Dorsolateral prefrontal cortex (tissue), 120 donors: ENCODE measurements at regions of chr20 and their contacts with region 1.

Region 1: DNA sequence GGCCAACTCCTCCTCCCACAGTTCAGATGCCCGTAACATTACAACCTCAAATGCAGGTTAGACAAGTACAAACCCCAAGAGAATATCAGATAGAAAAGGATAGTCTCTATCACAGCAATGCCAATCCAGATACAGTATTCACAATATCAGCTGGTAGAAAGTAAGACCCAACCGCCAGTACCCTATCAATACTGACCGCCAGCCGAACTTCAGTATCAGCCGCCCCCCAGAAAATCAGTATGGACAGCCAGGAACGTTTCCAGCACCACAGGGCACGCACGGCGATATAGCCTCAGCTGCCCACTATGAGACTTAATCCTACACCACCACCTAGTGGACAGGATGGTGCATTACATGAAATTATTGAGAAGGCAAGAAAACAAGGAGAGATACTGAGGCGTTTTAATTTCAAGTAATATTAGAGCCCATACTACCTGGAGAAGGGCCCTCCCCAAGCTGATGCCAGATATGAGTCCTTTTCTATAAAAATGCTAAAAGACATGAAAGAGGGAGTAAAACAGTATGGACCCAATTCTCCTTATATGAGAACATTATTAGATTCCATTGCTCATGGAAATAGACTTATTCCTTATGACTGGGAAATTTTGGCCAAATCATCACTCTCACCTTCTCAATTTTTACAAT is 17.6 kb upstream of the EIF2S2 start:
- DNase-seq: peak in 8 of 10 donors; percentile 22 to 73 (median 59)
- H3K4me3 ChIP-seq: peak overlapping the region in 56 of 59 donors; percentile 18 to 62 (median 46)
- H3K27ac ChIP-seq: peak overlapping the region in 2 of 59 donors; percentile 14 to 36
- H3K27me3 ChIP-seq: no peaks in the 10 kb centered on the region
- CTCF ChIP-seq: peak; percentile 74 to 97 (median 88)

Region 2: DNA sequence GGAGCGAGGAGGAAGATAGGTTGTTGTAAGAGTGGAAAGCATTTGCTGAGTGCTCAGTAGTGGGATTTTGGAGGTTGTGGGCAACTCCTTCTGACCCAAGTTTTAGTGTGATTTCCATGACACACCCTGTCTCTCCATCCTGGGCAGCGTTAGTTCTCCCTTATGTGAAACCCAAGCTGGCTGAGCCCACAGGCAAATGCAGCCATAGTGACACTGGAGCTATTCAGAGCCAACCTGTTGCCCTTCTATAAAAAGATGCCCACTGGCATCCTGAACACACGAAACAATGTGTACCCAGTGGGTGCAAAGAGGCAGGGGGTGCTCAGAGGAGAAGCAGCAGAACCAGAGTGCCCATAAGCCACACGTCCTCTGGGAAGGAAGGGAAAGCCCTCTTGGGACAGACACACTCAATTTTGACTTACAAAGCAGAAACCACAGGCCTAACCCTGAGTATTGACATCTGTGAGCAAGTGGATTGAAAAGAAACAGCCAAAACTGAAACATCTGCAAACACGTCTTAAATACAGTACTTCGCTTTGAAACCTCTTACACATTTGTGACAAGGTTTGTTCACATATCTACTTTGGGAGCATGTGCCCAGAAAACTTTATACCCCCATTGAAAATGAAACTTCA is 792.0 kb before region 1 on chr20:
- intact Hi-C with region 1: no loop called
- DNase-seq: no peak
- H3K4me3 ChIP-seq: no peak overlapping the region
- H3K27ac ChIP-seq: no peak overlapping the region
- H3K27me3 ChIP-seq: no peaks in the 10 kb centered on the region
- CTCF ChIP-seq: no peak

Region 3: GRCh38 chr20:33862709-33863403 is 266.8 kb before region 1 on chr20:
- intact Hi-C with region 1: loop called (anchors 5 kb)
- DNase-seq: peak; percentile 11 to 68 (median 58)
- H3K4me3 ChIP-seq: peak overlapping the region in 39 of 59 donors; percentile 2 to 52 (median 24)
- H3K27ac ChIP-seq: peak overlapping the region in 2 of 59 donors; percentile 11 to 20
- H3K27me3 ChIP-seq: no peaks in the 10 kb centered on the region
- CTCF ChIP-seq: peak; percentile 43 to 86 (median 71)

Region 4: DNA sequence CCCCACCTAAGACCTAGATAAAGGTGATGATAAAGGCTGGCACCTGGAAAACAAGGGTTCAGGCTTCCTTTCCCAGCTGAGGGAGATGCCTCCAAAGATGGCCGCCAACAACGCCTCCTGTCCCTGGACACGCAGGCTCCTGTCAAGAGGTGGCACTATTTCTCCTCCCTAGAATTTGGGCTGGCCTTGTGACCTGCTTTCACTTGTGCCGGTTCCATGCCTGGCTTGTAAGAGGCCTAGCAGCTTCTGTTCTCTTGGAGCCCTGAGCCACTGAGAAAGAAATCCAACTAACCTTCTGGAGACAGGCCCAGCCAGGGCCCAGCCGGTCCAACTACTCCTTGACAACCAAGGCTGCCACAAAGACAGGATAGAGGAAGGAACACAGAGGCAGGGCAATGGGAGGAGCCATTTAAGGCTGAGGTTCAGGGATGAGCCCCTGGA is 196.2 kb before region 1 on chr20:
- intact Hi-C with region 1: loop called in 1 of 2 experiments (anchors 5 kb)
- DNase-seq: peak; percentile 30 to 78 (median 68)
- H3K4me3 ChIP-seq: no peak overlapping the region
- H3K27ac ChIP-seq: peak overlapping the region in 47 of 59 donors; percentile 4 to 86 (median 60)
- H3K27me3 ChIP-seq: no peaks in the 10 kb centered on the region
- CTCF ChIP-seq: peak in 55 of 56 donors; percentile 30 to 87 (median 68)

Region 5: GRCh38 chr20:33947709-33948295 is 181.8 kb before region 1 on chr20:
- intact Hi-C with region 1: no loop called
- DNase-seq: no peak
- H3K4me3 ChIP-seq: no peak overlapping the region
- H3K27ac ChIP-seq: peak overlapping the region in 53 of 59 donors; percentile 24 to 99 (median 94)
- H3K27me3 ChIP-seq: no peaks in the 10 kb centered on the region
- CTCF ChIP-seq: peak in 39 of 56 donors; percentile 11 to 51 (median 25)